ENCODE measurements at regions of chr14 and their contacts with region 1.

Region 1: DNA sequence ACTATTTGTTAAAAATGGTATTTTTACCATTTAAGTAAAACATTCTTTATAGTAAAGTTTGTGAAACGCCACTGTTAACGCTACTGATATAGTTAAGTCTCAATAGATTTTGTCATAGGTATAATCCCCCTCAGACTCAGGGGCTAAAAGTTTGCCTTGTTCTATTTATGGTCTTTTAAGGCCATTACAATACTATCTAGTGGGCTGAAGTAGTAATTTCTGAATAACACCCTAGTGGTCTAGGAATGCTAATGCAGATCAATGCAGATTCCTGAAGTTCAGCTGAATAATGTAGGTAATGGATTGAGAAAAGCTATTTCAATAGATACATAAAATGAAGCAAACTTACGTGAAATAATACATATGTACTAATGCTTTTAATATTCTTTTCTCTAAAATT is 989.3 kb upstream of the NOVA1 start:
- DNase-seq: no peak
- H3K4me3 ChIP-seq: no peak overlapping the region
- H3K27ac ChIP-seq: no peak overlapping the region
- H3K4me1 ChIP-seq: no peaks in the 10 kb centered on the region
- H3K27me3 ChIP-seq: no peaks in the 10 kb centered on the region
- CTCF ChIP-seq: no peak
- POLR2A ChIP-seq: no peak

Region 2: GRCh38 chr14:29348504-29348903 is 1761.4 kb after region 1 on chr14:
- intact Hi-C with region 1: loop called (anchors 5 kb)
- DNase-seq: no peak
- H3K4me3 ChIP-seq: no peak overlapping the region
- H3K27ac ChIP-seq: no peak overlapping the region
- H3K4me1 ChIP-seq: no peaks in the 10 kb centered on the region
- H3K27me3 ChIP-seq: no peaks in the 10 kb centered on the region
- CTCF ChIP-seq: no peak
- POLR2A ChIP-seq: no peak